ENCODE measurements at regions of chr13 and their contacts with region 1.

Region 1: DNA sequence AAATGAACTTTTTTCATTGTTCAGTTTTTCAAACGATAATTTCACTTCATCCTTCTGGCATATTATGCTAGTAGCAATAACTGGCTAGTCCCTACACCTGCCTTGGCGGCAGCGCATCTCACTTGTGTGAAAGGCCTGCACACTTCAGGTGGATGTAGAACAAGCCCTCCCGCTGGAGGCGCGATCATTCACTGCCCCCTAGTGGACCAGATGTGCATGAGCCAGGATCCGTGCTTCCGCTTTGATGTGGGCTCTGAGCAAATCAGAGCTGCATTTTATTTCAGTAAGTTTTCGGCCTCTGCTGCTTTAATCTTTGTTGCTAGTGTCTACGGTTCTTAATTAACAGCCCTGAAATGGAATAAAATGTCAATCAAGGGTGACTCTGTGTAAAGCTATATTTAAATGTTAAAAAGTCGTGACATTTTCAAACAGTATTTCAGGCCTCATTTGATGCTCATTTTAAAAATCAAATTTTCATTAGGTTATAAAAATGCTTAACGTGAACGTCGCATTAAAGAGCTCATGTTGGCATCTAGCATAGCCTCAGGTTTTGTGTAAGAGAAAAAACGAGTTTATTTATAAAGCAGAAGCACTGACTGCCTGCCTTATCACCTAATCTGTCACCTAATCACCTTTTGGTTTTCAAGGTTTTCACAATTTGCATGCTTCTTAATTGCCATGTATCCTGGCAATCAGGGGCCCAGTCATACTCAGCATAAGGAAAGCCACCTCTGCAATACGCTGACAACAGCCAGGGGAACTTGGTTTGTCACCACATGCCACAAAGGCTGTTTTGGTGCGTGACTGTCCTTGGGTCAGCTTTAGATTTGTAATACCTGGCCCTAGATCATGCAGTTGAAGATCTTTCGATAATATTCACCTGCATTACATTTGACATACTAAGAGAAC is 112.2 kb downstream of the TEX26 start:
- DNase-seq: peak; percentile 81
- H3K4me3 Mint-ChIP-seq: no peak overlapping the region
- H3K27ac Mint-ChIP-seq: peak overlapping the region; percentile 90
- H3K4me1 Mint-ChIP-seq: peaks cover 15% of the 10 kb centered on the region
- H3K27me3 Mint-ChIP-seq: no peaks in the 10 kb centered on the region
- CTCF ChIP-seq: peak; percentile 84

Region 2: GRCh38 chr13:30257468-30258099 is 787.0 kb before region 1 on chr13:
- CTCF ChIA-PET with region 1: no interaction called
- POLR2A ChIA-PET with region 1: no interaction called
- intact Hi-C with region 1: loop called (anchors 10 kb)
- DNase-seq: no peak
- H3K4me3 Mint-ChIP-seq: no peak overlapping the region
- H3K27ac Mint-ChIP-seq: no peak overlapping the region
- H3K4me1 Mint-ChIP-seq: no peaks in the 10 kb centered on the region
- H3K27me3 Mint-ChIP-seq: no peaks in the 10 kb centered on the region
- CTCF ChIP-seq: no peak

Region 3: GRCh38 chr13:30802953-30803478 is 241.6 kb before region 1 on chr13:
- CTCF ChIA-PET with region 1: interaction called, 8 read pairs
- POLR2A ChIA-PET with region 1: interaction called, 4 read pairs
- intact Hi-C with region 1: loop called (anchors 2 kb)
- DNase-seq: peak; percentile 80
- H3K4me3 Mint-ChIP-seq: peak overlapping the region; percentile 68
- H3K27ac Mint-ChIP-seq: peak overlapping the region; percentile 7
- H3K4me1 Mint-ChIP-seq: peaks cover 11% of the 10 kb centered on the region
- H3K27me3 Mint-ChIP-seq: no peaks in the 10 kb centered on the region
- CTCF ChIP-seq: peak; percentile 96

Region 4: DNA sequence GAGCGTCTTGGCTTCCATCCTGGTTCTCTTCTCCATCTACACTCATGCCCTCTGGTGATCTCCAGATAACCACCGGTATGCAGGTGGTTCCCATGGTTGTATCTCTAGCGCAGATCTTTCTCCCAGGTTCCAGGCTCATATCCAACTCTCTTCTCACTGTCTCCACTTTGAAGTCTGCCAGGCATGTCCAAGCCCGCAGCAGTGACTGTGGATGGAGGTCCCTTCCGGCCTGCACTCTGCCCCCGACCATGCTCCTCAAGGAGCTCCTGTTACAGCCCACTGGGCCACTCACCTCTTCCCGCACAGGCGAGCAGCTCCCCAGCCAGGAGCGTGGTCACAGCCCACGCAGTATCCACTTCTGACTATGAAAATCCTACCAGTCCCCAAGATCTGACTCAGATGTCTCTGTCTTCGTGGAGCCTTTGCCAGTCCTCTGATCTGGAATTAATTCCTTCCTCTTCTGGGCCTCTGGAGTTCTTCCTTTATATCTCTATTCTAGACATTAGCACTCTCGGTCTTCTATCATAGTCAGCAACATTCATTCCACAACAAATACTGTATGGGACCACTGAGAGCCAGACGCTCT is 12.0 kb before region 1 on chr13:
- CTCF ChIA-PET with region 1: interaction called, 19 read pairs
- POLR2A ChIA-PET with region 1: interaction called, 3 read pairs
- intact Hi-C with region 1: no loop called
- DNase-seq: no peak
- H3K4me3 Mint-ChIP-seq: no peak overlapping the region
- H3K27ac Mint-ChIP-seq: no peak overlapping the region
- H3K4me1 Mint-ChIP-seq: peaks cover 7% of the 10 kb centered on the region
- H3K27me3 Mint-ChIP-seq: no peaks in the 10 kb centered on the region
- CTCF ChIP-seq: no peak

Region 5: GRCh38 chr13:31115616-31116015 is 71.0 kb after region 1 on chr13:
- CTCF ChIA-PET with region 1: interaction called, 6 read pairs
- POLR2A ChIA-PET with region 1: interaction called, 12 read pairs
- intact Hi-C with region 1: no loop called
- DNase-seq: no peak
- H3K4me3 Mint-ChIP-seq: no peak overlapping the region
- H3K27ac Mint-ChIP-seq: no peak overlapping the region
- H3K4me1 Mint-ChIP-seq: no peaks in the 10 kb centered on the region
- H3K27me3 Mint-ChIP-seq: peaks cover 35% of the 10 kb centered on the region
- CTCF ChIP-seq: no peak

Measured in MCF 10A (cell line).